ENCODE measurements at regions of chr1 and their contacts with region 1.

Region 1: GRCh38 chr1:235075188-235075926 is 53.3 kb downstream of the TOMM20 start:
- DNase-seq: peak; percentile 88 to 93
- ATAC-seq: peak; percentile 81
- H3K4me3 ChIP-seq: no peak overlapping the region
- H3K27ac ChIP-seq: peak overlapping the region; percentile 58 to 93
- H3K4me1 ChIP-seq: peaks cover 0 to 5% of the 10 kb centered on the region in 2 donors
- H3K27me3 ChIP-seq: no peaks in the 10 kb centered on the region

Region 2: GRCh38 chr1:234610348-234611152 is 464.8 kb before region 1 on chr1:
- intact Hi-C with region 1: loop called (anchors 2 to 5 kb)
- DNase-seq: peak; percentile 98
- ATAC-seq: peak; percentile 87
- H3K4me3 ChIP-seq: peak overlapping the region; percentile 89 to 92
- H3K27ac ChIP-seq: peak overlapping the region; percentile 96 to 97
- H3K4me1 ChIP-seq: peaks cover 5% of the 10 kb centered on the region in 2 donors
- H3K27me3 ChIP-seq: no peaks in the 10 kb centered on the region

Region 3: DNA sequence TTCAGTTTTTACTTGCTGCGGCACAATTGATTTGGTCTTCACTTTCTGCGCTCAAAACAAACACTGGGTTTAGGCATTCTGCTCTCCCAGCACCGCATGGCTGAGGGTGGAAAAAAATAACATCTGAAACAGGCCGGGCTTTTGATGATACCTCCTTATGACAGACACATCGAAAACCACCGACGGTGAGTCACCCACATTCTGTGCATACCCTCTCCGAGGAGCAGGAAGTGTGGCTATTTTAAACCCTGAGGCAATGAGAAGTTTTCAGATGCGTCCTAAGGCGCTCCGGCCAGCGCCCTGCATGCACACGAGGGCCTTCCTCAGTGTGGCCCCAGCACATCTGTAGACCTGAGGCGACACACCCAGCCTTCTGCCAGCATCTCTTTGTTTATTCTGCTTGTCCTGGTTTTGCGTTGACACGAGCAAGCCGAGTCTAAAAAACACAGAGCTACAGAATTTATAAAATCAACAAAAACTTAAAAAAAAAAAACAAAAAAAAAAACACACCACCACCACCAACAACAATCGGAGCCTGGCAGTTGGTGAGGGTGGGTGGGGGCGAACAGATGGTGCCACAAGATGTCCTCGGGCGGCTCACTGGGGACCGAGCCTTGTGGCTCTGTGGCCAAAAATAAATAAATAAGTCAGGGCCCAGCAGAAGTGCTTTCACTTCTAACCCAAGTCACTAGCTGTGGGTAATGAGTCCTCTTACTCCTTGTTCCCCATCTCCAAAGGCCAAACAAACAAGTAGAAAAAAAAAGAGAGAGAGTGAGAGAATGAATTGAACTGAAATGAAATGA is 302.8 kb before region 1 on chr1:
- intact Hi-C with region 1: loop called in 1 of 2 experiments (anchors 5 kb)
- DNase-seq: peak; percentile 88 to 93
- ATAC-seq: peak; percentile 64
- H3K4me3 ChIP-seq: no peak overlapping the region
- H3K27ac ChIP-seq: peak overlapping the region in 1 of 2 donors; percentile 62
- H3K4me1 ChIP-seq: no peaks in the 10 kb centered on the region
- H3K27me3 ChIP-seq: no peaks in the 10 kb centered on the region

Region 4: DNA sequence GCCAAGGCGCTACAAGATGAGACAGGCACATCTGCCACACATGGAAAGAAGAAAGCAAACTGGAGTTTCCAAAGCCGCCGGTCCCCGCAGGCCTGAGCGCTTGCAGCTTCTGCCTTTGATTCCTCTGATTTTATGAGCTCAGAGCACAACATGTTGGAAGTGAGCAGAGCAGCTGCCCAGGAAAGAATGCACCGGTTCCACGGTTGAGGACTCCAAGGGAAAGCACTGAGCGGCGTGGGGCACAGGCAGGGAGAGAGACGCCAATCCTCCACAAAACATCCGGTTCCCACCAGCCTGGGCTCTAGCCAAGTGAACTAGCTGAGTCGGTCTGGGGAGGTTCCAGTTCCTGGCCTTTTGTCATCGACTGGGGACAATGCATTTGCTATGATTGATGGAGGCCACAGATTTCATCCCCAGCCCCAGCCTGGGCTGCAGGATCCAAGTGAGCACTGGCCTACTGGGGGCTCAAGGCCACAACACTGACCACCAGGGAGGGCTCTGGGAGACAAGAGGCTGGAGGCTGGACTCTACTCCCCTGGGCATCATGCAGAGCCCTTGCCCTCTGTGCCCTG is 212.3 kb before region 1 on chr1:
- intact Hi-C with region 1: loop called in 1 of 2 experiments (anchors 5 kb)
- DNase-seq: peak; percentile 89 to 90
- ATAC-seq: peak; percentile 79
- H3K4me3 ChIP-seq: no peak overlapping the region
- H3K27ac ChIP-seq: peak overlapping the region; percentile 37 to 90
- H3K4me1 ChIP-seq: no peaks in the 10 kb centered on the region
- H3K27me3 ChIP-seq: no peaks in the 10 kb centered on the region

Region 5: DNA sequence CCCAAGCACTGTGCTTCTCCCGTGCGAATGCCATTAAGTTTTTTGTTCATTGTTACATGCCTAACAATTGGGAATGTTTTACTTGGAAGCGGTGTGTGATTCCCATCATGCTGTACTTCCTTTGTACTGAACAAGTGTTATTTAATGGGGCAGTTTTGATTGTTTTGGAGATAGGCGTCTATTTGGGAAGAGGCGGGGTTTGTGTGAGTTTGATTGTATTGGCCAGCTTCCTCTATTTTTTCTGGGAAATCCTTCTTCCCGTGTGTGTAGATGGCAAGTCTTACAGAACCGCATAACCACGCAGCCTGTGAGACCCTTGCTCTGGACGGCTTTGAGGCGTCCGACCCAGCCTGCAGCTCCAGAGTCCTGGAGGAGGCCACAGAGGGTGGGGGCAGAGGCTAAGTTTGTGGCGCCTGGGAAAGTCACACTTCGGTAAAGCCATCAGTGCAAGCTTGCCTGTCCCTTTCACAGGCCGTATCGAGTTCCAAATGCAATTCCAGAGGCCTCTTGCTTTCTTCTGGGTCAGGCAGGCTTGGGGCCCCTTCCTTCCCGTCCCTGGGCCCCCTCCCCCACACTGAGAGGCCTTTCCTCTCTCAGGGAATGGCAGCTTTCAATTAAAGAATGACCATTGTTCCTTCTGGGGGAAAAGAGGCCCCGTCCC is 157.0 kb before region 1 on chr1:
- intact Hi-C with region 1: loop called (anchors 2 to 5 kb)
- DNase-seq: peak; percentile 74 to 80
- ATAC-seq: peak; percentile 74
- H3K4me3 ChIP-seq: no peak overlapping the region
- H3K27ac ChIP-seq: peak overlapping the region; percentile 51 to 97
- H3K4me1 ChIP-seq: peaks cover 2 to 3% of the 10 kb centered on the region in 2 donors
- H3K27me3 ChIP-seq: no peaks in the 10 kb centered on the region

Region 6: GRCh38 chr1:234980645-234981396 is 94.5 kb before region 1 on chr1:
- intact Hi-C with region 1: loop called (anchors 2 to 5 kb)
- DNase-seq: peak; percentile 95
- ATAC-seq: peak; percentile 90
- H3K4me3 ChIP-seq: no peak overlapping the region
- H3K27ac ChIP-seq: peak overlapping the region; percentile 97 to 98
- H3K4me1 ChIP-seq: peaks cover 7 to 10% of the 10 kb centered on the region in 2 donors
- H3K27me3 ChIP-seq: no peaks in the 10 kb centered on the region

Region 7: GRCh38 chr1:234987415-234988154 is 87.8 kb before region 1 on chr1:
- intact Hi-C with region 1: loop called (anchors 2 to 5 kb)
- DNase-seq: peak; percentile 88 to 89
- ATAC-seq: peak; percentile 85
- H3K4me3 ChIP-seq: no peak overlapping the region
- H3K27ac ChIP-seq: peak overlapping the region; percentile 97 to 100
- H3K4me1 ChIP-seq: peaks cover 4 to 5% of the 10 kb centered on the region in 2 donors
- H3K27me3 ChIP-seq: no peaks in the 10 kb centered on the region

Region 8: GRCh38 chr1:235035928-235036327 is 39.4 kb before region 1 on chr1:
- intact Hi-C with region 1: no loop called
- DNase-seq: no peak
- ATAC-seq: no peak
- H3K4me3 ChIP-seq: no peak overlapping the region
- H3K27ac ChIP-seq: no peak overlapping the region
- H3K4me1 ChIP-seq: no peaks in the 10 kb centered on the region
- H3K27me3 ChIP-seq: no peaks in the 10 kb centered on the region

Region 9: GRCh38 chr1:235583511-235584001 is 508.2 kb after region 1 on chr1:
- intact Hi-C with region 1: no loop called
- DNase-seq: no peak
- ATAC-seq: no peak
- H3K4me3 ChIP-seq: no peak overlapping the region
- H3K27ac ChIP-seq: no peak overlapping the region
- H3K4me1 ChIP-seq: no peaks in the 10 kb centered on the region
- H3K27me3 ChIP-seq: no peaks in the 10 kb centered on the region

Measured in aorta (tissue), 5 donors.